ENCODE measurements at regions of chr7 and their contacts with region 1.

Region 1: GRCh38 chr7:85750454-85750949 is 563.6 kb upstream of the SEMA3D start:
- DNase-seq: peak; percentile 72
- H3K4me3 ChIP-seq: no peak overlapping the region
- H3K27ac ChIP-seq: no peak overlapping the region
- H3K4me1 ChIP-seq: no peaks in the 10 kb centered on the region
- H3K27me3 ChIP-seq: no peaks in the 10 kb centered on the region
- CTCF ChIP-seq: peak; percentile 79

Region 2: DNA sequence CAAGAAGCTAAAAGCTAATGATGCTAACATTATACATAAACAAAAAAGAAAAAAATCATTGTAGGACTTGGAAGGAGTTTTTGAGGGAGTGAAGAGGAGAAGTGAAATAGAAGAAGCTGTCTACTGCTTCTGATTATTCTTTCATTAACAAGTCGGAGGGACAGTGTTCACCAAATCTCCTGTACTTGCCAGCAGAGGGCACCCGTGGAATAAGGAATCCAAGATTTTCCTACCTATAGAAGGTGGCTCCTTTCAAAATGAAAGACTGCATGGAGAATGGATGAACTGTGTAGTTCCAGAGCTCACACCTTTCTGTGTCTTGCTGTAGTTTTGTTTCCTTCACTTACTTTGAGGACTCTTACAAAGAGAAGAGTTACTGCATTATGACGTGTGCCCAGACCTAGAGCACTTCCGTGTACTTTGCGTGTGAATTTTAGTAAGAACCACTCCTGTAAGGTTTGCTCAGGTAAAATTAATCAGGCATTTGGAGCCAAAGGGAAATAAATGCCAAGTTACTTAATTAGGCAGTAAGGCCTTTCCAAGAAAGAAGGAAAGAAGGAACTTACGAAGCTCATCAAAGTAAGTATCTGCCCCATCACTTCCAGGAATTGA is 708.8 kb before region 1 on chr7:
- CTCF ChIA-PET with region 1: no interaction called
- POLR2A ChIA-PET with region 1: no interaction called
- intact Hi-C with region 1: loop called (anchors 2 kb)
- DNase-seq: peak; percentile 80
- H3K4me3 ChIP-seq: no peak overlapping the region
- H3K27ac ChIP-seq: no peak overlapping the region
- H3K4me1 ChIP-seq: peaks cover 8% of the 10 kb centered on the region
- H3K27me3 ChIP-seq: no peaks in the 10 kb centered on the region
- CTCF ChIP-seq: peak; percentile 87

Region 3: GRCh38 chr7:85471740-85472139 is 278.8 kb before region 1 on chr7:
- CTCF ChIA-PET with region 1: no interaction called
- POLR2A ChIA-PET with region 1: no interaction called
- intact Hi-C with region 1: loop called (anchors 5 kb)
- DNase-seq: no peak
- H3K4me3 ChIP-seq: no peak overlapping the region
- H3K27ac ChIP-seq: no peak overlapping the region
- H3K4me1 ChIP-seq: no peaks in the 10 kb centered on the region
- H3K27me3 ChIP-seq: no peaks in the 10 kb centered on the region
- CTCF ChIP-seq: no peak